SK-N-SH (cell line): ENCODE measurements at regions of chr5 and their contacts with region 1.

Region 1: DNA sequence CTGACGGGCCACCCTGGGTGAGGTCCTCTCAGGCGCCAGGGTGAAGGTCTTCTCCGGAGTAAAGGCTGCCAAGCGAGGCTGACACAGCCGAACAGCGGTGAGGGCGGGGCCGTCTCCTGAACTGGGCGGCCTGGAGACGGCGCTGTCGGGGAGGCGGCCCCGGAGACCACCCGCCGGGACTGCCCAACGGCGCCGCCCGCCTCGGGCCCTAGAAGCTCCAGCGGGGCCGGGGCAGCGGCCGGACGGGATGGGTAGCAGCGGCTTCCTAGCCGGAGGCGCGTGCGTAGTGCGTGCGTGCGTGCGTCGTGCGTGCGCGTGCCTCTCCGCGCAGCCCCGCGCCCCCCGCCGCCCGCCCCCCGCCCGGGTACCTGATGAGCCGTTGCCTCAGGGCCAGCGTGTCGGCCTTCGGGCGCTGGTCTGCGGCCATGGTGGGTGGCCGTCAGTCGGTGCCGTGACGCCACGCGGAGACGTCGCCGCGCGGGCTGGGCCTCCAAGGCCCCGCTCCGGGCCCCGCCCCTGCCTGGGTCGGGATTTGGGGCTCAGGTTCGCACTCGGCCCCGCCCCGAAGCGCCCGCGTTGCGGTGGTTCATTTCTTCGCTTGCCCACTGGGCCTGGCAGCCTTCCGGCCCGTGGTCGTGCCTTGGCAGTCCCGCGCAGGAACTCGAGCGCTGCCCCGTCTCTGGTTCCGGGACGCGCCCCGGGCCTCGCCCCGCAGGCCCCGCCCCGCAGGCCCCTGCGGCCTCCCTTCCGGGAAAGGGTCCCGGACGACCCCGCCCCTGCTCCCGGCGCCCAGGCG is at the start of gene PHYKPL:
- DNase-seq: peak; percentile 91
- H3K4me3 ChIP-seq: peak within 1 kb of the TSS; percentile 87
- H3K27ac ChIP-seq: peak within 1 kb of the TSS; percentile 56 to 86
- H3K4me1 ChIP-seq: peaks cover 11 to 33% of the 10 kb centered on the region in 2 experiments; a peak in 2 of 4 replicates
- H3K27me3 ChIP-seq: no peaks in the 10 kb centered on the region
- CTCF ChIP-seq: peak; percentile 27
- EP300 ChIP-seq: no peak
- RAD21 ChIP-seq: no peak
- polyA plus RNA-seq, gene PHYKPL: 46.8 and 61.3 TPM in 2 replicates

Region 2: GRCh38 chr5:178249191-178249989 is 17.1 kb after region 1 on chr5:
- CTCF ChIA-PET with region 1: interaction called, 17 read pairs
- POLR2A ChIA-PET with region 1: no interaction called
- DNase-seq: no peak
- H3K4me3 ChIP-seq: no peak overlapping the region
- H3K27ac ChIP-seq: no peak overlapping the region; a peak in 1 of 4 replicates
- H3K4me1 ChIP-seq: peaks cover 0 to 20% of the 10 kb centered on the region in 2 experiments; a peak in 1 of 4 replicates
- H3K27me3 ChIP-seq: no peaks in the 10 kb centered on the region
- CTCF ChIP-seq: no peak
- EP300 ChIP-seq: no peak
- RAD21 ChIP-seq: no peak

Region 3: GRCh38 chr5:178483620-178484019 is 251.3 kb after region 1 on chr5:
- CTCF ChIA-PET with region 1: no interaction called
- POLR2A ChIA-PET with region 1: no interaction called
- DNase-seq: no peak
- H3K4me3 ChIP-seq: no peak overlapping the region
- H3K27ac ChIP-seq: no peak overlapping the region
- H3K4me1 ChIP-seq: peaks cover 0 to 19% of the 10 kb centered on the region in 2 experiments; a peak in 1 of 4 replicates
- H3K27me3 ChIP-seq: no peaks in the 10 kb centered on the region
- CTCF ChIP-seq: no peak
- EP300 ChIP-seq: no peak
- RAD21 ChIP-seq: no peak

Region 4: DNA sequence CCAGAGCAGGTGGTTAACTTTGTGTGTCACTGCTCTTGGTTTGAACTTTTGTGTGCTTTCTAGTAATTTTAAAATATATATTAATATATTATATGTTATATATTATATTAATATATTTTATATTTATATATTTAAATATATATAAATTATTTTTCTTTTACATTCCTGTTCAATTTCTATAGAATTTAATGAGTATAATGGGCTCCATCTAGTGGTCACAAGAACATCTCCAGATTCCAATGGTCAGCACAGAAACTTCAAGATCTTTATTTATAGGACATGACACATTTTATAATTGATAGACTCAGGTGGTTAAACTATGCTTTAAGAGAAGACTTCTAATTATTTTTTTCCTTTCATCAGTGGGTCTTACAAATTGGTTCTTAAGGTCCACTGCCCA is 318.7 kb after region 1 on chr5:
- CTCF ChIA-PET with region 1: interaction called, 13 read pairs
- POLR2A ChIA-PET with region 1: no interaction called
- DNase-seq: peak; percentile 54
- H3K4me3 ChIP-seq: no peak overlapping the region
- H3K27ac ChIP-seq: no peak overlapping the region; a peak in 1 of 4 replicates
- H3K4me1 ChIP-seq: peaks cover 0 to 29% of the 10 kb centered on the region in 2 experiments; a peak in 2 of 4 replicates
- H3K27me3 ChIP-seq: no peaks in the 10 kb centered on the region
- CTCF ChIP-seq: peak; percentile 45
- EP300 ChIP-seq: no peak
- RAD21 ChIP-seq: peak; percentile 66

Region 5: DNA sequence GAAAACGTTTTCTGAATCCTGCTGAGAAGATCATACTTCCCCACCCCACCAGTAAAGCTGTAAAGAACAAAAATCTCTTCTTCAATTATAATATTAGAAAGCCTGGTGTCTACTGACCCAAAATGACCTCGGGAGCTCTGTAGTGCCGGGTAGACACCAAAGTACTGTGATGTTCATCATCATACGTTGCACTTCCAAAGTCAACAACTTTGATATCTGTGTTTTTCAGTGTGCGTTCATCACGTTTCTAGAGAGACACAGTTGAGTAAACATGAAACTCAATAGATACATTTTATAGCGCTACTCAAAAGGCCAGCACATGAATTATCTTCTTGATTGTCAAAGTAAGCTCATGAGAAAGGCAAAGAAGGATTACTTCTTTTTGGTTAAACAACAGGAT is 380.0 kb after region 1 on chr5:
- CTCF ChIA-PET with region 1: interaction called, 10 read pairs
- POLR2A ChIA-PET with region 1: no interaction called
- DNase-seq: no peak
- H3K4me3 ChIP-seq: no peak overlapping the region
- H3K27ac ChIP-seq: no peak overlapping the region
- H3K4me1 ChIP-seq: no peaks in the 10 kb centered on the region
- H3K27me3 ChIP-seq: no peaks in the 10 kb centered on the region
- CTCF ChIP-seq: no peak
- EP300 ChIP-seq: no peak
- RAD21 ChIP-seq: no peak

Region 6: GRCh38 chr5:178624631-178625546 is 392.6 kb after region 1 on chr5:
- CTCF ChIA-PET with region 1: interaction called, 11 read pairs
- POLR2A ChIA-PET with region 1: interaction called, 4 read pairs
- DNase-seq: no peak
- H3K4me3 ChIP-seq: peak overlapping the region; percentile 83 to 97
- H3K27ac ChIP-seq: peak overlapping the region; percentile 56 to 77
- H3K4me1 ChIP-seq: peaks cover 5 to 6% of the 10 kb centered on the region in 2 experiments; a peak in 2 of 4 replicates
- H3K27me3 ChIP-seq: no peaks in the 10 kb centered on the region
- CTCF ChIP-seq: no peak
- EP300 ChIP-seq: no peak
- RAD21 ChIP-seq: no peak